ENCODE measurements at regions of chr20 and their contacts with region 1.

Region 1: DNA sequence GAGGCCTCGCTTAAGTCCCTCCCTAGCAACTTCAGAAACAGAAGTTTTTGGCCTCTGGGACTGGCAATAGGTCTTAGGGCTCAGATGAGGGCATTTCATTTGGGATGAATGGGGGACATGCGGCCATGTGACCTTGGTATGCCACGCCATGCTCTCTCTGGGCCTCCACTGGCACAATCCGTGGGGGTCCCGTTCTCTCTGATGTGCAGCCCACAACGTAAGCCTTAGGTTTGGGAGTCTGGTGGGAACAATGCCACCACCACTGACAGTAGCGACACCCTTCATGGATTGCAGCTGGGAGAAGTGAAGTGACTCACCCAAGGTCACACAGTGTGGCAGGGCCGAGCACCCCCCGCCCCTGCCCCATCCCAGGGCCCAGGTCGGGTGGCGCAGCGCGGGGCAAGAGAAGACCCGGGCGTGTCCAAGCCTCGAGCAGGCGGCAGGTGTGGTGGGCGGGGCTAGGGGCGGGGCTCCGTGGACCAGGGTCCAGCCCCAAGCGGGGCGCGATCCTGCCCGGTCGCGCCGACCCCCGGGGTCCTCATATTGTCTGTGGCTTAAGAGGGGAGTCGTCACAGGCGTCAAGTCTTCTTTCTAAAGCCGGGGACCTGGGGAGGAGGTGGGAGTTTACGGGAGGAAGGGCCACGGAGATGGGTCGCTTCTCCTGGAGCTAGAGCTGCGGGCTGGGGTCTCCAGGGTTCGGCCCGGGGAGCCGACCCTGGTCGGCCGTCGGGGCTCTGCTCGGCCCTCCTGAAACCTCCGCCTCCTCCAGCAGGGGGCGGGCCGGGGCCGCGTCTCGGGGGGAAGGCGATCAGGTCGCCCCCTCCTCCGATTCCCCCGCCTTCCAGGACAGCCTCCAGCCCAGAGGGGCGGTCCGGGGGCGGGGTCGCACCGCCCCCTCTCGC is 698 bp upstream of the CEBPB start:
- DNase-seq: peak; percentile 93
- ATAC-seq: peak; percentile 60
- H3K4me3 Mint-ChIP-seq: peak overlapping the region; percentile 30
- H3K27ac Mint-ChIP-seq: no peak overlapping the region
- H3K4me1 Mint-ChIP-seq: peaks cover 20% of the 10 kb centered on the region
- H3K27me3 Mint-ChIP-seq: peaks cover 9% of the 10 kb centered on the region

Region 2: GRCh38 chr20:50153485-50154377 is 36.2 kb before region 1 on chr20 and contains the start of gene PEDS1:
- CTCF ChIA-PET with region 1: interaction called, 4 read pairs
- POLR2A ChIA-PET with region 1: interaction called, 3 read pairs
- intact Hi-C with region 1: loop called in 1 of 2 experiments (anchors 1 kb)
- DNase-seq: peak; percentile 91
- ATAC-seq: peak; percentile 98
- H3K4me3 Mint-ChIP-seq: peak within 1 kb of the TSS; percentile 75
- H3K27ac Mint-ChIP-seq: peak within 1 kb of the TSS; percentile 88
- H3K4me1 Mint-ChIP-seq: peaks cover 36% of the 10 kb centered on the region
- H3K27me3 Mint-ChIP-seq: no peaks in the 10 kb centered on the region
- total RNA-seq, gene PEDS1: 13.2 to 16.8 TPM

Region 3: GRCh38 chr20:50286609-50287008 is 96.7 kb after region 1 on chr20:
- CTCF ChIA-PET with region 1: no interaction called
- POLR2A ChIA-PET with region 1: no interaction called
- intact Hi-C with region 1: loop called in 1 of 2 experiments (anchors 10 kb)
- DNase-seq: peak; percentile 33
- ATAC-seq: peak; percentile 8
- H3K4me3 Mint-ChIP-seq: no peak overlapping the region
- H3K27ac Mint-ChIP-seq: no peak overlapping the region
- H3K4me1 Mint-ChIP-seq: peaks cover 22% of the 10 kb centered on the region
- H3K27me3 Mint-ChIP-seq: peaks cover 2% of the 10 kb centered on the region

Region 4: GRCh38 chr20:50381888-50382593 is 192.1 kb after region 1 on chr20:
- CTCF ChIA-PET with region 1: interaction called, 3 read pairs
- POLR2A ChIA-PET with region 1: no interaction called
- intact Hi-C with region 1: loop called (anchors 2 kb)
- DNase-seq: peak; percentile 53
- ATAC-seq: peak; percentile 52
- H3K4me3 Mint-ChIP-seq: peak overlapping the region; percentile 35
- H3K27ac Mint-ChIP-seq: peak overlapping the region; percentile 86
- H3K4me1 Mint-ChIP-seq: peaks cover 46% of the 10 kb centered on the region
- H3K27me3 Mint-ChIP-seq: no peaks in the 10 kb centered on the region

Region 5: GRCh38 chr20:50561379-50562078 is 371.6 kb after region 1 on chr20:
- CTCF ChIA-PET with region 1: interaction called, 3 read pairs
- POLR2A ChIA-PET with region 1: no interaction called
- intact Hi-C with region 1: loop called in 1 of 2 experiments (anchors 5 kb)
- DNase-seq: peak; percentile 85
- ATAC-seq: peak; percentile 84
- H3K4me3 Mint-ChIP-seq: peak overlapping the region; percentile 76
- H3K27ac Mint-ChIP-seq: peak overlapping the region; percentile 99
- H3K4me1 Mint-ChIP-seq: peaks cover 85% of the 10 kb centered on the region
- H3K27me3 Mint-ChIP-seq: no peaks in the 10 kb centered on the region

Region 6: GRCh38 chr20:50744143-50744792 is 554.3 kb after region 1 on chr20:
- CTCF ChIA-PET with region 1: no interaction called
- POLR2A ChIA-PET with region 1: no interaction called
- intact Hi-C with region 1: loop called (anchors 5 to 10 kb)
- DNase-seq: peak; percentile 40
- ATAC-seq: no peak
- H3K4me3 Mint-ChIP-seq: no peak overlapping the region
- H3K27ac Mint-ChIP-seq: peak overlapping the region; percentile 71
- H3K4me1 Mint-ChIP-seq: peaks cover 46% of the 10 kb centered on the region
- H3K27me3 Mint-ChIP-seq: no peaks in the 10 kb centered on the region